ENCODE measurements at regions of chr20 and their contacts with region 1.

Region 1: GRCh38 chr20:51639206-51639832 is 96.8 kb upstream of the NFATC2 start:
- DNase-seq: peak; percentile 57 to 61 (median 58)
- ATAC-seq: peak; percentile 81 to 85 (median 84)
- H3K4me3 ChIP-seq: no peak overlapping the region
- H3K27ac ChIP-seq: no peak overlapping the region
- H3K4me1 ChIP-seq: no peaks in the 10 kb centered on the region
- H3K27me3 ChIP-seq: no peaks in the 10 kb centered on the region
- CTCF ChIP-seq: peak; percentile 73 to 79 (median 78)
- POLR2A ChIP-seq: no peak

Region 2: DNA sequence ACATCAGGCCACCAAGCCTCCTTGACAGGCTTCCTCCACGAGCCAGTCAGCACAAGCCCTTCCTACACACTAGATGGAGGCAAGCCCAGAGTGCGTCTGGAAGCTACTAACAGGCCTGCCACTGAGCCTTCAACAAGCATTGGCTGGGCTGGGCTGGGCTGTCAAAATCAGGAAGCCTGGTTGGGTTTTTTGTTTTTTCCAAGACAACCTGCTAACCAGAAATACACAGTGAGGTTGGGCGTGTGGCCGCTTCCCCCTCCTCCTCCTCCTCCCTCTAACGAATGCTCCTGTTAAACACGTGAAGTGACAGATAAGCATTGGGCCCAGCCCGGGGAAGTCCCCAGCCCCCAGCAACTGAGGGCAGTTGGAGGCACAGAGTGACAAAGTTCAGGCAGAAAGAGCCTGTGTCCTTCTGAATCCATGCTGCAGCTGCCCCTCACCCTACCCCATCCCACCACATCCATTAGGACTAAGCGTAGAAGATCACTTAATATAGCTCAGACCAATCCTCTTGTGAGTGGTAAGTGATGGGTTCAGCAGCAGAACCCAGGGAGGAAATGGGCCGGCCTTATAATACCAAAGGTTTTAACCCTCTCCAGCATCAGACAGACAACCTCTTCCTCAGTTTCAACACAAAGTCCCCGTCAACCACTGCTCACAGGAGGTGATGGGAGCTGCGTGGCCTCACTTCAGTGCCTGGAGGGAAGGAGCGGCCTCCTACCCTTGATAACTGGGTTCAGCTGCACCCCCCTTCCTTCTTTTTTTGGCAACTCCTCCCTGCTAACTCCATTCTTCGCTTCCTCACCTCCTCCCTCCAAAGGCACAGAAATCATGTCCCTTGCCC is 97.9 kb before region 1 on chr20:
- intact Hi-C with region 1: no loop called
- DNase-seq: peak; percentile 69 to 88 (median 83)
- ATAC-seq: peak; percentile 72 to 81 (median 78)
- H3K4me3 ChIP-seq: peak overlapping the region; percentile 60 to 76 (median 66)
- H3K27ac ChIP-seq: peak overlapping the region; percentile 72 to 78 (median 78)
- H3K4me1 ChIP-seq: peaks cover 0 to 20% (median 8%) of the 10 kb centered on the region in 4 donors
- H3K27me3 ChIP-seq: no peaks in the 10 kb centered on the region
- CTCF ChIP-seq: no peak
- POLR2A ChIP-seq: no peak

Region 3: DNA sequence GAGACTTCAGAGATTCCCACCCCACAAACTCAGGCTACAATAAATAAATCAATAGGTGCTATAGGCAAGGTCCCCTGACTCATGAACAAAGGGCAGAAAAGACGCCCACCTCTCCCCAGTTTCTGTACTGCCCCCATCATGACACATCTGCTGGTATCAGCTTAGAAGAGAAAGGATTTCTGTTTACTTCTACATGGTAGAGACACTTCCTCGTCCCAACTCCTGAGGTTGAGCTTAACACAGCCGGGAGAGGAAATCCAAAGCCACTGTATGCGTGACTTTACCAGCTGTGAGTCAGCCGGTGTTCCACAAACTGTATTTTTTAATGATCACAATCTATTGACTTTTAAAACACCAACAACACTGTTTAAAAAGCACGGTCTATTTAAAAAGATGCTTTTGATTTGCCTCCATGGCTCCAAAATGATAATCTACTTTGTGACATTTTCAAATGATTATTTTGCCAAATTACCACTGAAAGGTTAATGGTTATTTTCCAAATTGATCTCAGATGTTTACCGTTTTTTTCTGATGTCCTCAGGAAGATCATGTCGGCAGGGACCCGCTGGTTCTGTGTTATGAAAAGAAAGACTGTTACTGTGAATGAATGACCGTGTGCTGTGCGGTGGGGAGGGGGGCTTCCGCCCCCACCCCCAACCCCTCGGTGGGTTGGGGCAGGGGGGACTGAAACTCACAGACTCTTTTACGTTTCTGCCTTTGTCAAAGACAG is 56.4 kb after region 1 on chr20:
- intact Hi-C with region 1: no loop called
- DNase-seq: no peak
- ATAC-seq: peak in 2 of 4 donors; percentile 68 to 77
- H3K4me3 ChIP-seq: no peak overlapping the region
- H3K27ac ChIP-seq: no peak overlapping the region
- H3K4me1 ChIP-seq: no peaks in the 10 kb centered on the region
- H3K27me3 ChIP-seq: no peaks in the 10 kb centered on the region
- CTCF ChIP-seq: no peak
- POLR2A ChIP-seq: no peak

Region 4: DNA sequence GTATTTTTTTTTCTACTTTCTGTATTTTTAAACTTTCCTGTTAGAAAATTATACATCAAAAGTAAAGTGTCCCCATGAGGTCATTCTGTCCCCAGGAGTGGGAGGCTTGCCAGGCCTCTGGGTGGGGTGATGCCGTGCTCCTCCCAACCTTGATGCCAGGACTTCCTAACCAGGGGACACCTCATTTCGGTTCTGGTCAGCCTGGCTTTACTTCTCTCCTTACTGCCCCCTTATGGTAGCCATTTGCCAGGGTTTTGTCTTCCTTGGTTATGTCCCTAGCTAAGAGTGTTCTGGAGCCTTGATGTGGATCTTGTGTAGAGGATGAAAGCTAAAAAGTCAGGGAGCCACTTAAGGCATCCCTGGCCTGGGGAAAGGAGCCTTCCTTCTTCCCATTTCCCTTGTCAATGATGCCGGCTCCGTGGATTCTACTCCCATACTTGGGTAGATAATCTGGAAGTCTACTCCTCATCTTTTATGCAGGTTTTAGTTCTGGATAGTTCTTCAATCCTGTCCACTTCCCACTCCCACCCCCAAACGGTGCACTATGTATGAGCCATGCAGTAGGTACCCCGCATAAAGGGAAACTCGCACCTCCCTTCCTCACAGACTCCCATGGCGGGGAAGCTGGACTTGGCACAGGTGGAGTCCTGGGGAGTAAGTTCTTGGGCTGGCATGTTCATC is 327.1 kb after region 1 on chr20:
- intact Hi-C with region 1: loop called in 1 of 2 experiments (anchors 10 kb)
- DNase-seq: peak in 2 of 3 donors; percentile 51 to 55
- ATAC-seq: peak; percentile 90 to 99 (median 92)
- H3K4me3 ChIP-seq: no peak overlapping the region
- H3K27ac ChIP-seq: no peak overlapping the region
- H3K4me1 ChIP-seq: no peaks in the 10 kb centered on the region
- H3K27me3 ChIP-seq: no peaks in the 10 kb centered on the region
- CTCF ChIP-seq: peak; percentile 56 to 65 (median 60)
- POLR2A ChIP-seq: no peak